CD14-positive monocyte (primary cell): ENCODE measurements at regions of chr9 and their contacts with region 1.

Region 1: GRCh38 chr9:6353851-6354686 is 25.9 kb downstream of the TPD52L3 start:
- DNase-seq: peak; percentile 23 to 40 (median 27)
- H3K4me3 ChIP-seq: no peak overlapping the region
- H3K4me3 Mint-ChIP-seq: no peak overlapping the region
- H3K27ac ChIP-seq: no peak overlapping the region
- H3K27ac Mint-ChIP-seq: no peak overlapping the region
- H3K4me1 ChIP-seq: no peaks in the 10 kb centered on the region
- H3K4me1 Mint-ChIP-seq: peaks cover 3% of the 10 kb centered on the region
- H3K27me3 ChIP-seq: peaks cover 0 to 4% of the 10 kb centered on the region in 2 donors
- H3K27me3 Mint-ChIP-seq: peaks cover 6 to 12% (median 8%) of the 10 kb centered on the region in 3 donors
- CTCF ChIP-seq: peak; percentile 79

Region 2: GRCh38 chr9:6566409-6567139 is 212.5 kb after region 1 on chr9:
- intact Hi-C with region 1: loop called (anchors 5 kb)
- DNase-seq: peak; percentile 55 to 82 (median 68)
- H3K4me3 ChIP-seq: no peak overlapping the region
- H3K4me3 Mint-ChIP-seq: no peak overlapping the region
- H3K27ac ChIP-seq: no peak overlapping the region
- H3K27ac Mint-ChIP-seq: peak overlapping the region in 4 of 7 donors; percentile 7 to 73 (median 20)
- H3K4me1 ChIP-seq: peaks cover 15 to 36% of the 10 kb centered on the region in 2 donors
- H3K4me1 Mint-ChIP-seq: peaks cover 41% of the 10 kb centered on the region
- H3K27me3 ChIP-seq: no peaks in the 10 kb centered on the region
- H3K27me3 Mint-ChIP-seq: peaks cover 1 to 3% (median 2%) of the 10 kb centered on the region in 3 donors
- CTCF ChIP-seq: no peak

Region 3: GRCh38 chr9:6739218-6739617 is 385.1 kb after region 1 on chr9:
- intact Hi-C with region 1: loop called in 1 of 2 experiments (anchors 10 kb)
- DNase-seq: peak in 1 of 3 donors; percentile 14
- H3K4me3 ChIP-seq: no peak overlapping the region
- H3K4me3 Mint-ChIP-seq: no peak overlapping the region
- H3K27ac ChIP-seq: no peak overlapping the region
- H3K27ac Mint-ChIP-seq: no peak overlapping the region
- H3K4me1 ChIP-seq: no peaks in the 10 kb centered on the region
- H3K4me1 Mint-ChIP-seq: no peaks in the 10 kb centered on the region
- H3K27me3 ChIP-seq: no peaks in the 10 kb centered on the region
- H3K27me3 Mint-ChIP-seq: peaks cover 0 to 1% (median 0%) of the 10 kb centered on the region in 3 donors
- CTCF ChIP-seq: peak; percentile 49